H1 (cell line): ENCODE measurements at regions of chr17 and their contacts with region 1.

Region 1: DNA sequence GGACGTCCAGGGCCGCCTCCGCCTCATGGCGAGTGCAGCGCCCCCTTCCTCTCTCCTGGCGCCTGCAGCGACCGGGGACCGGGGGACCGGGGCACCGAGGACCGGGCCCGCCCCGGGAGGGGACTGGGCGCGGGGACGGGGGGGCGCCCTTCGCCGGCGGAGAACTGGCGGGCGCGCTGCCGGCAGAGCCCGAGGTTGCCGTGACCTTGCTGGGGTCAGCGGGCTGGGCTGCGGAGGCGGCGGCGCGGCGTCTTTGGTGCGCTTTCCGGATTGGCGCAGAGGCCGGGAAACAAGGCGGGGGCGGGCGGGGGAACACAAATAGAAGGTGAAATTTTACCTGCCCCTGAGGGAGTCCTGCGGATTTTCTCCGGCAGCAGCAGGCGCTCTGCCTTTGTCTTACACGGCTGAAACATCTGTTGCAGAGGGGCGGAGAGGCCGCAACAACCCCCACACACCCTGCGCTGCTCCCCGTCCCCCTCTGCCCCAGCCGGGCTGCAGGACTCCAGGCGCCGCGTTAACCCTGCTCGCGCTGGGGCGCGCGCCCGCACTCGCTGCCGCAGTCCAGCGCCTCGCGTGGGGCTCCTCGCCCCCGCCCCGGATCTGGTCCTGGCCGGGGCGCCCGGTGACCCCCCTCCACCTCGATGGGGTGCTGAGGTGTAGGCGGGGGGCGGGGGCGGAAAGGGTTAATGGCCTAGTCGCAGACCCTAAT is 53.5 kb downstream of the SREBF1 start:
- DNase-seq: peak; percentile 38 to 83
- H3K4me3 ChIP-seq: peak overlapping the region; percentile 58 to 75 (median 64)
- H3K27ac ChIP-seq: no peak overlapping the region
- H3K4me1 ChIP-seq: peaks cover 20 to 38% (median 27%) of the 10 kb centered on the region in 4 experiments
- H3K27me3 ChIP-seq: peaks cover 0 to 40% (median 13%) of the 10 kb centered on the region in 4 experiments; a peak in 6 of 7 replicates
- CTCF ChIP-seq: peak; percentile 5 to 26 (median 21); a peak in 3 of 4 replicates
- EP300 ChIP-seq: no peak
- POLR2A ChIP-seq: no peak
- RAD21 ChIP-seq: no peak

Region 2: DNA sequence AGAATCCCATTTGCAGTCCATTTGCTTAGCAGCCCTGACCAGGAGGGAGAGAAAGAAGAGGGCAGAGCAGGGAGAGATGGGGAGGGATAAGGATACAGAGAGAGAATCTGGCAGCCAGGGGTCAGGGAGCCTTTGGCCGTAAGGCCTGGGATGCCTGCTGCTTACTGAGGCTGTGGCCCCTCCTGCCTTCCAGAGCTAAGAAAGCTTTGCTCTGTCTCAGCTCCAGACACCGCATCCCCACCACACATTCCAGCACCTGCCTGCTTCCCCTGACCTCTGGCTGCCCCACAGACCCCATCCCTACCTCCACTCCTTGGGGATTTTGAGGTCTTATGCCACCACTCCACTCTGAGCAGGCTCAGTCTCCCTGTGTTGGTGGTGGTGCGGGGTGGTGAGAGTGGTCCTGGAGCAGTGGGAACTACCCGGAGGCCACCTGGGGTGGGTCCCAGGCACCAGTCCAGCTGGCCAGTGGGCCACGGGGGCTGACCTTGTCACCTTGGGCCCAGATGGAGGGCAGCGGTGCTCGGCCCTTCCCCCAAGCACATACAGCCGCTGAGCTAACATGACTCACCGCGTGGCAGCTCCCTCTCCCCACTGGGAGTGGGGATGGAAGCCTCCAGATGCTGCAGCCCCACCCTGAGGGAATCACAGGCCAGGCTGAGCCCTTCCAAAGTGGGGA is 43.7 kb before region 1 on chr17:
- CTCF ChIA-PET with region 1: interaction called, 10 read pairs
- POLR2A ChIA-PET with region 1: no interaction called
- DNase-seq: no peak
- H3K4me3 ChIP-seq: no peak overlapping the region
- H3K27ac ChIP-seq: no peak overlapping the region
- H3K4me1 ChIP-seq: peaks cover 7 to 39% (median 29%) of the 10 kb centered on the region in 4 experiments
- H3K27me3 ChIP-seq: peaks cover 0 to 15% (median 6%) of the 10 kb centered on the region in 4 experiments; a peak in 5 of 7 replicates
- CTCF ChIP-seq: no peak
- EP300 ChIP-seq: no peak
- POLR2A ChIP-seq: no peak
- RAD21 ChIP-seq: no peak

Region 3: GRCh38 chr17:17757391-17757791 is 25.9 kb before region 1 on chr17:
- CTCF ChIA-PET with region 1: interaction called, 12 read pairs
- POLR2A ChIA-PET with region 1: interaction called, 3 read pairs
- DNase-seq: no peak
- H3K4me3 ChIP-seq: no peak overlapping the region
- H3K27ac ChIP-seq: no peak overlapping the region
- H3K4me1 ChIP-seq: peaks cover 0 to 11% (median 6%) of the 10 kb centered on the region in 4 experiments; a peak in 6 of 7 replicates
- H3K27me3 ChIP-seq: no peaks in the 10 kb centered on the region
- CTCF ChIP-seq: no peak
- EP300 ChIP-seq: no peak
- POLR2A ChIP-seq: no peak
- RAD21 ChIP-seq: no peak